Activated CD8-positive, alpha-beta T cell treated with anti-CD3 and anti-CD28 coated beads for 36 hours (primary cell): ENCODE measurements at regions of chr9 and their contacts with region 1.

Region 1: DNA sequence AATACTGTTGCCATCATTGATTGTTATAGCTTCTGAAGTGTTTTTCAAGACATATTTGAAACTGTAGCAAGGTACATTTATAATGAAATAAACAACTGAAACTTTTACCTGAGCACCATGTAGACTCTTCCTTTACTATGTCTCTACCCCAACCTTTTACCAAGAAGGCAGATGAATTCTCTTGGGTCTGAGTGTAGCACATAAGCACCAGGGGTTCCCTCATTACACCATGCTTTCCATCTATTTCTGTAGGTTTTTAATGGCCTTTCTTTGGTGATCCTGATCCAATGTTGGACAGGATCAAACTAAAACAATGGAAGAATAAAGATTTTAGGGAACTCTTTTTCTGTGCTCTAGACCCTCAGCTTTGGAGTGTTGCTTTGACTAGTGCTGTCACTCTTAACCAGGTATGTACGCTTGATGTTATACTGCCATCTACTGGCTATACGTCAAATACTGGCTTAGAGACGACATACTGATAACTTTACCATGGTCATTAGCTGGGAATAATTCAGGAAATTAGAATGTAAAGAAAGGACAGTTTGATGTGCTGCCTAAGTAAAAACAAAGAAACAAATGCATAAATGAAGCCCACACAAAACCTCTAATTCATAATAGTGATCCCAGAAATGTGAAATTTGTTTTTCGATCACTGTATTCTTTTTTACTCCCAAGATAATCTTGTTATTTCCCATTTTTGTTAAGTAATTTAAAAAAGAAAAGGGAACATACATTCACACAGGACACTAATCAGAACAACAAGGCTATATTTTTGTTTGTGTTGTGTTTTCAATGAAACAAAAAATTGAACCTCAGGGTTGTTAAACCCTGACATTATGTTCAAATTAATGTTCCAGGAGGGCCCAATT is 30.7 kb downstream of the IFNW1 start:
- DNase-seq: peak; percentile 18
- ATAC-seq: peak; percentile 87
- H3K4me3 Mint-ChIP-seq: no peak overlapping the region
- H3K27ac Mint-ChIP-seq: no peak overlapping the region
- H3K4me1 Mint-ChIP-seq: no peaks in the 10 kb centered on the region
- H3K27me3 Mint-ChIP-seq: no peaks in the 10 kb centered on the region
- CTCF ChIP-seq: peak; percentile 91

Region 2: GRCh38 chr9:19925817-19926503 is 1185.0 kb before region 1 on chr9:
- CTCF ChIA-PET with region 1: interaction called, 4 read pairs
- POLR2A ChIA-PET with region 1: no interaction called
- intact Hi-C with region 1: loop called (anchors 5 kb)
- DNase-seq: peak; percentile 84
- ATAC-seq: peak; percentile 99
- H3K4me3 Mint-ChIP-seq: peak overlapping the region; percentile 58
- H3K27ac Mint-ChIP-seq: no peak overlapping the region
- H3K4me1 Mint-ChIP-seq: peaks cover 10% of the 10 kb centered on the region
- H3K27me3 Mint-ChIP-seq: peaks cover 13% of the 10 kb centered on the region
- CTCF ChIP-seq: peak; percentile 95

Region 3: GRCh38 chr9:20884985-20885593 is 225.9 kb before region 1 on chr9:
- CTCF ChIA-PET with region 1: interaction called, 42 read pairs
- POLR2A ChIA-PET with region 1: no interaction called
- intact Hi-C with region 1: loop called (anchors 10 kb)
- DNase-seq: peak; percentile 76
- ATAC-seq: peak; percentile 42
- H3K4me3 Mint-ChIP-seq: no peak overlapping the region
- H3K27ac Mint-ChIP-seq: no peak overlapping the region
- H3K4me1 Mint-ChIP-seq: no peaks in the 10 kb centered on the region
- H3K27me3 Mint-ChIP-seq: no peaks in the 10 kb centered on the region
- CTCF ChIP-seq: peak; percentile 63

Region 4: GRCh38 chr9:20948703-20949102 is 162.2 kb before region 1 on chr9:
- CTCF ChIA-PET with region 1: interaction called, 11 read pairs
- POLR2A ChIA-PET with region 1: no interaction called
- intact Hi-C with region 1: loop called (anchors 5 kb)
- DNase-seq: no peak
- ATAC-seq: no peak
- H3K4me3 Mint-ChIP-seq: no peak overlapping the region
- H3K27ac Mint-ChIP-seq: no peak overlapping the region
- H3K4me1 Mint-ChIP-seq: no peaks in the 10 kb centered on the region
- H3K27me3 Mint-ChIP-seq: no peaks in the 10 kb centered on the region
- CTCF ChIP-seq: no peak

Region 5: DNA sequence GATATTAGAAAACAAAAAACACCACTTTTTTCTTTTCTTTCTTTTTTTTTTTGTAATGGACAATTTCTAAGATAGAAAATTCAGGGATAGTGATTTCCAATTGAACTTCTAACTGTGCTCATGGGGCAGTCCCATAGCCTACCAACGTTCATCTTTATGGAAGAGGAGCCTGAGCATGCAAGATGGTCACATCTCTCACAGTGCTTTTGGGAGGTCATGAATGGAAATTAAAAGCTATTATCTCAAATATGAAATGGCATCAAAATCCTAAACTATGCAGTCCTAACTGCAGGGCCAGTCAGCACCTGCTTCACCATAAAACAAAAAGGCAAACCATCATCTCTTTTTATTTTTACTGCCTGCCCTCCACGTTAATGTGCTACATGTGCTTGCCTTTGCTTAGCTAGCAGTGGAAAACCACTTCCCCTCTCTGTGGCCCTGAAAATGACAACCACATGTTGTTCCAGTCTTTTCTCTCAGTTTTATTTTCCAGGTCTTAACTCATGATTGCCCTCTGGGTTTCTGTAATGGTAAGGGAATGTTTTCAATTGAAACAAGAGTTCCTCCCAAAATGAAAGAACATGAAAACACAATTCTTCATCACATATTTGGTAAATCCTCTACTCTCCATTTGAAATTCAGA is 49.9 kb before region 1 on chr9:
- CTCF ChIA-PET with region 1: interaction called, 10 read pairs
- POLR2A ChIA-PET with region 1: no interaction called
- intact Hi-C with region 1: no loop called
- DNase-seq: peak; percentile 24
- ATAC-seq: peak; percentile 53
- H3K4me3 Mint-ChIP-seq: no peak overlapping the region
- H3K27ac Mint-ChIP-seq: peak overlapping the region; percentile 3
- H3K4me1 Mint-ChIP-seq: peaks cover 20% of the 10 kb centered on the region
- H3K27me3 Mint-ChIP-seq: no peaks in the 10 kb centered on the region
- CTCF ChIP-seq: no peak

Region 6: GRCh38 chr9:21096172-21096900 is 14.6 kb before region 1 on chr9:
- CTCF ChIA-PET with region 1: interaction called, 12 read pairs
- POLR2A ChIA-PET with region 1: no interaction called
- intact Hi-C with region 1: no loop called
- DNase-seq: peak; percentile 59
- ATAC-seq: peak; percentile 95
- H3K4me3 Mint-ChIP-seq: peak overlapping the region; percentile 75
- H3K27ac Mint-ChIP-seq: peak overlapping the region; percentile 93
- H3K4me1 Mint-ChIP-seq: peaks cover 40% of the 10 kb centered on the region
- H3K27me3 Mint-ChIP-seq: no peaks in the 10 kb centered on the region
- CTCF ChIP-seq: no peak